ENCODE measurements at regions of chr11 and their contacts with region 1.

Region 1: GRCh38 chr11:4626207-4627099 is 10.8 kb upstream of the OR51D1 start:
- DNase-seq: peak in 1 of 2 experiments; percentile 84
- H3K4me3 ChIP-seq: no peak overlapping the region
- H3K27ac ChIP-seq: no peak overlapping the region
- H3K4me1 ChIP-seq: no peaks in the 10 kb centered on the region
- H3K27me3 ChIP-seq: no peaks in the 10 kb centered on the region
- CTCF ChIP-seq: peak; percentile 4 to 81 (median 65)
- EP300 ChIP-seq: no peak
- POLR2A ChIP-seq: no peak
- RAD21 ChIP-seq: peak; percentile 93

Region 2: DNA sequence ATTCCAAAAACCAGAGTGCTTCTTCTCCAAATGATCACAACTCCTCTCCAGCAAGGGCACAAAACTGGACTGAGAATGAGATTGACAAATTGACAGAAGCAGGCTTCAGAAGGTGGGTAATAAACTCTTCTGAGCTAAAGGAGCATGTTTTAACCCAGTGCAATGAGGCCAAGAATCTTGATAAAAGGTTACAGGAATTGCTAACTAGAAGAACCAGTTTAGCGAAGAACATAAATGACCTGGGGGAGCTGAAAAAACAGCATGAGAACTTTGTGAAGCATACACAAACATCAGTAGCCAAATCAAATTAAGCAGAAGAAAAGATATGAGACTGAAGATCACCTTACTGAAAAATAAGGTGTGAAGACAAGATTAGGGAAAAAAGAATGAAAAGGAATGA is 66.0 kb before region 1 on chr11:
- CTCF ChIA-PET with region 1: no interaction called
- POLR2A ChIA-PET with region 1: no interaction called
- DNase-seq: no peak
- H3K4me3 ChIP-seq: no peak overlapping the region
- H3K27ac ChIP-seq: no peak overlapping the region
- H3K4me1 ChIP-seq: peaks cover 0 to 3% (median 2%) of the 10 kb centered on the region in 4 experiments; a peak in 3 of 7 replicates
- H3K27me3 ChIP-seq: no peaks in the 10 kb centered on the region
- CTCF ChIP-seq: no peak
- EP300 ChIP-seq: no peak
- POLR2A ChIP-seq: no peak
- RAD21 ChIP-seq: no peak

Region 3: DNA sequence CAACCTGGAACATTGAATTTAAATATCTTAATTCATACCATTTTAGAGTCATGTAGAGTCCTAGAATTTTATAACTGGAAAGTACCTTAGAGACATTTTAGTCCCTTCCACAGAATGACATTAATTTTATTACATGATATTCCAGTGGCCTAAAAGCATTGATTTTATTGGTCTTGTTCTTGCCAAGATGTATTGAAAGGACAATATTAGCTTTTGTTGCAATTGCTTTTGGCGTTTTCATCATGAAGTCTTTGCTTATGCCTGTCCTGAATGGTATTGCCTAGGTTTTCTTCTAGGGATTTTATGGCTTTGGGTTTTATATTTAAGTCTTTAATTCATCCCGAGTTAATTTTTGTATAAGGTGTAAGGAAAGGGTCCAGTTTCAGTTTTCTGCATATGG is 114.3 kb after region 1 on chr11:
- CTCF ChIA-PET with region 1: no interaction called
- POLR2A ChIA-PET with region 1: no interaction called
- DNase-seq: no peak
- H3K4me3 ChIP-seq: no peak overlapping the region
- H3K27ac ChIP-seq: no peak overlapping the region
- H3K4me1 ChIP-seq: no peaks in the 10 kb centered on the region
- H3K27me3 ChIP-seq: no peaks in the 10 kb centered on the region
- CTCF ChIP-seq: no peak
- EP300 ChIP-seq: no peak
- POLR2A ChIP-seq: no peak
- RAD21 ChIP-seq: no peak

Region 4: GRCh38 chr11:4808476-4808875 is 182.0 kb after region 1 on chr11:
- CTCF ChIA-PET with region 1: no interaction called
- POLR2A ChIA-PET with region 1: no interaction called
- DNase-seq: no peak
- H3K4me3 ChIP-seq: no peak overlapping the region
- H3K27ac ChIP-seq: no peak overlapping the region
- H3K4me1 ChIP-seq: no peaks in the 10 kb centered on the region
- H3K27me3 ChIP-seq: no peaks in the 10 kb centered on the region
- CTCF ChIP-seq: no peak
- EP300 ChIP-seq: no peak
- POLR2A ChIP-seq: no peak
- RAD21 ChIP-seq: no peak

Region 5: GRCh38 chr11:4826425-4826824 is 200.0 kb after region 1 on chr11:
- CTCF ChIA-PET with region 1: interaction called, 47 read pairs
- POLR2A ChIA-PET with region 1: no interaction called
- DNase-seq: no peak
- H3K4me3 ChIP-seq: no peak overlapping the region
- H3K27ac ChIP-seq: no peak overlapping the region
- H3K4me1 ChIP-seq: peaks cover 0 to 2% (median 0%) of the 10 kb centered on the region in 4 experiments; a peak in 1 of 7 replicates
- H3K27me3 ChIP-seq: peaks cover 0 to 2% (median 0%) of the 10 kb centered on the region in 4 experiments; a peak in 1 of 7 replicates
- CTCF ChIP-seq: peak in 2 of 3 experiments; percentile 48 to 56; a peak in 2 of 4 replicates
- EP300 ChIP-seq: no peak
- POLR2A ChIP-seq: no peak
- RAD21 ChIP-seq: peak; percentile 79 to 86

Region 6: DNA sequence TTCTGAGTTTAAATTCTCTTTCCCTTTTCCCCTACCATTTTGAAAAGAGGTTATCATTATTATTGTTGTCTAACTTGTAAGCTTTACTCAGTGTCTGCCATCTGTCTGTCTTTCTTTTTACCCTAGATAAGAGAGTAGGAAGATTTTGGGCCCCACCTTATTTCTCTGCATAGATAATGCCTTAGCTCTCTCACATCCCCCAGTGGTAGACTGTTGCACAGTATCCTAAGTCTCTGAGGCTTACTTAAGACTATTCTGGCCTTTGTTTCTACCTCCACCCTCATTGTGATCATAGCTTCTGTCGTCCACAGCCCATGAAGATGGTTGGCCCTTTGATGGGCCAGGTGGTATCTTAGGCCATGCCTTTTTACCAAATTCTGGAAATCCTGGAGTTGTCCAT is 364.6 kb after region 1 on chr11:
- CTCF ChIA-PET with region 1: interaction called, 10 read pairs
- POLR2A ChIA-PET with region 1: no interaction called
- DNase-seq: no peak
- H3K4me3 ChIP-seq: no peak overlapping the region
- H3K27ac ChIP-seq: no peak overlapping the region
- H3K4me1 ChIP-seq: no peaks in the 10 kb centered on the region; a peak in 1 of 7 replicates
- H3K27me3 ChIP-seq: peaks cover 0 to 1% (median 0%) of the 10 kb centered on the region in 4 experiments; a peak in 1 of 7 replicates
- CTCF ChIP-seq: peak in 2 of 3 experiments; percentile 16 to 28; a peak in 1 of 4 replicates
- EP300 ChIP-seq: no peak
- POLR2A ChIP-seq: no peak
- RAD21 ChIP-seq: peak; percentile 39 to 52

Region 7: DNA sequence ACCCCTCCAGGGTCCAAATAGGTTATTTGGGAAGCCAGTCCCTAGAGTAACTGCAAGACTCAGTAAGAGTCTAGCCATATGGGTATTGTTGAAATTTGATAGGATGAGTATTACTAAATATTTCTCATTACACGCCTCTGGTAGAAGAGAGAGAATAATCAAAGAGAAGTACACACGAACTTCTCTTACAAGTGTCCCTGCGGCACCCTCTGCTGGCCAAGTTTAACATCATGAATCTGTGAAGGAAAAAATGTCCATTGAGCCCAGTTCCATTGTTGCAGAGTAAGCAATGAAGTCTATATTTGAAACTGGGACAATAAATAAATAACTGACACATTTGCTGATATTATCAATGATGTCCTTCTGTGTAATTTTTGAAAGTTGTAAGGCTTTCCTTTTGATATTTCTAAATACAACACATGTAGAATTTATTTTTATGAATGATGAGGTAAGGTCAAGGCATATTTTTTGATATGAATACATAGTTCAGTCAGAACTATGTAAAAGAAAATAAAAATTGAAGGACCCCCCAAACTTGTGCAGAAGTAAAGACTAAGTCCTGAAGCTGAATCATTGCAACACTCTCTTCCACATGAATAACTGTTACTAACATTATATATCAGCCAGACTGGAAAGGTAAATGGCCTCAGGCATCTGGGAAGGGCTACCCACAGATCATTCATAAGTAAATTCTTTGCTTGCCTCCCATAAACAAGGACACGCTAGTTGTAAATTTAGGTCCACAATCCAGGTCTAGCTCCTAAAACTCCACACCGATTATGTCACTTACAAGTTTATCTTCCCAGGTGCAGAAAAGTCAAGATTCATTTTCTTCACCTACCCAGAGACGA is 378.2 kb after region 1 on chr11:
- CTCF ChIA-PET with region 1: interaction called, 11 read pairs
- POLR2A ChIA-PET with region 1: no interaction called
- DNase-seq: peak; percentile 2 to 70
- H3K4me3 ChIP-seq: no peak overlapping the region
- H3K27ac ChIP-seq: no peak overlapping the region
- H3K4me1 ChIP-seq: no peaks in the 10 kb centered on the region
- H3K27me3 ChIP-seq: no peaks in the 10 kb centered on the region
- CTCF ChIP-seq: peak in 2 of 3 experiments; percentile 65 to 71; a peak in 3 of 4 replicates
- EP300 ChIP-seq: no peak
- POLR2A ChIP-seq: no peak
- RAD21 ChIP-seq: peak; percentile 83 to 84

Region 8: GRCh38 chr11:5092821-5093585 is 466.6 kb after region 1 on chr11:
- CTCF ChIA-PET with region 1: no interaction called
- POLR2A ChIA-PET with region 1: no interaction called
- DNase-seq: no peak
- H3K4me3 ChIP-seq: no peak overlapping the region
- H3K27ac ChIP-seq: no peak overlapping the region
- H3K4me1 ChIP-seq: no peaks in the 10 kb centered on the region
- H3K27me3 ChIP-seq: no peaks in the 10 kb centered on the region
- CTCF ChIP-seq: no peak
- EP300 ChIP-seq: no peak
- POLR2A ChIP-seq: no peak
- RAD21 ChIP-seq: no peak